ENCODE measurements at regions of chr20 and their contacts with region 1.

Region 1: DNA sequence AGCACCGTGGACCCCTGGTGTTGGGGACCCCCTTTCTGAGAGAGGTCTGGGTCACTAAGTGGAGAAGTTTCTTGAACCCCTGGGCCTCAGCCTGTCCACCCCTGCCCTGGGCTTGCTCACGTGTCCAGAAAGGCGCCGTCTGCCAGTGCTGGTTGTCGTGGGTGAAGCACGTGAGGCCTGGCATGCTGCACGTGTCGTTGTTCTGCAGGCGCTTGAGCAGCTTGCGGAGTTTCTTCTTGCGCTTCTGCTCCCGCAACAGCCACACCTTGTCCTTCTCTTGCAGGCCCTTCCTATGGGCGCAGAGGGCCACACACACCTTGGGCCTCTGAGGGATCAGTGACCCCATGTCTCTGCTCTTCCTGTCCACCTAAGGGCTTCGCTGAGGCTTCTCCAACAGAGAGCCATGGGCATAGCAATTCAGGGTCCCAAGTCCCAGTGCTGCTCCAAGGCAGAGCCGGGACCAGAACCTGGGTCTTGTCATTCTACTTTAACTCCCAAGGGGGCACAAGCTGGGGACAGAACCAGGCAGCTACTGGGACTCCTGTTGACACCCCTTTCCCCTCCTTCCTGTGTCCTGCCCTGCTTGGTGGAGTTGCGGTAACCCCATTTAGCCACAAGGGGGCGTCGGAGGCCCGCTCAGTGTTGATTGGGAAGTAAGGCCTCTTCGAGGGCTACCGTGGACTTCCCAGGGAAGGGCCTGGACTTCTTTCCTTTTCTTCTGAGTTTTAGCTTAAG is 121.8 kb downstream of the SULF2 start:
- DNase-seq: peak; percentile 59 to 93 (median 80)
- ATAC-seq: peak; percentile 95
- H3K4me3 ChIP-seq: no peak overlapping the region
- H3K27ac ChIP-seq: no peak overlapping the region
- H3K4me1 ChIP-seq: peaks cover 0 to 9% of the 10 kb centered on the region in 2 donors
- H3K27me3 ChIP-seq: no peaks in the 10 kb centered on the region
- CTCF ChIP-seq: peak; percentile 97 to 98

Region 2: DNA sequence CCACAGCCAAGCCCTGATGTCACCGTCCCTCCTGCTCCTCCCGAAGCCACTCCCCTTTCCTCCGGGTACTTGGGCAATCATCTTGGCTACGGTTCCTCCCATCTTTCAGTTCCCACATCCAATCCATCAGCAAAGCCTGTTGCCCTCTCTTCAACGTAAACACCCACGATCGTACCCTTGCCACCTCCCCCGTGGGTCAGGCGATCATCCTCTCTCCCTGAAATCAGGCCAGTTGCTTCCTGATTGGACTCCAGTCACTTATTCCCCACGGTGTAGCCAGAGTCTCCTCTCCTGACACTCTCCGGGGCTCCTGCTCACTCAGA is 77.3 kb after region 1 on chr20:
- intact Hi-C with region 1: no loop called
- DNase-seq: peak in 2 of 4 donors; percentile 79 to 83
- ATAC-seq: peak; percentile 74
- H3K4me3 ChIP-seq: no peak overlapping the region
- H3K27ac ChIP-seq: no peak overlapping the region
- H3K4me1 ChIP-seq: peaks cover 0 to 22% of the 10 kb centered on the region in 2 donors
- H3K27me3 ChIP-seq: peaks cover 0 to 31% of the 10 kb centered on the region in 2 donors
- CTCF ChIP-seq: no peak

Region 3: GRCh38 chr20:47821481-47822439 is 158.3 kb after region 1 on chr20:
- intact Hi-C with region 1: no loop called
- DNase-seq: no peak
- ATAC-seq: no peak
- H3K4me3 ChIP-seq: no peak overlapping the region
- H3K27ac ChIP-seq: no peak overlapping the region
- H3K4me1 ChIP-seq: no peaks in the 10 kb centered on the region
- H3K27me3 ChIP-seq: peaks cover 0 to 62% of the 10 kb centered on the region in 2 donors
- CTCF ChIP-seq: no peak

Region 4: GRCh38 chr20:47914792-47915191 is 251.3 kb after region 1 on chr20:
- intact Hi-C with region 1: no loop called
- DNase-seq: no peak
- ATAC-seq: no peak
- H3K4me3 ChIP-seq: no peak overlapping the region
- H3K27ac ChIP-seq: no peak overlapping the region
- H3K4me1 ChIP-seq: no peaks in the 10 kb centered on the region
- H3K27me3 ChIP-seq: peaks cover 0 to 20% of the 10 kb centered on the region in 2 donors
- CTCF ChIP-seq: no peak

Region 5: DNA sequence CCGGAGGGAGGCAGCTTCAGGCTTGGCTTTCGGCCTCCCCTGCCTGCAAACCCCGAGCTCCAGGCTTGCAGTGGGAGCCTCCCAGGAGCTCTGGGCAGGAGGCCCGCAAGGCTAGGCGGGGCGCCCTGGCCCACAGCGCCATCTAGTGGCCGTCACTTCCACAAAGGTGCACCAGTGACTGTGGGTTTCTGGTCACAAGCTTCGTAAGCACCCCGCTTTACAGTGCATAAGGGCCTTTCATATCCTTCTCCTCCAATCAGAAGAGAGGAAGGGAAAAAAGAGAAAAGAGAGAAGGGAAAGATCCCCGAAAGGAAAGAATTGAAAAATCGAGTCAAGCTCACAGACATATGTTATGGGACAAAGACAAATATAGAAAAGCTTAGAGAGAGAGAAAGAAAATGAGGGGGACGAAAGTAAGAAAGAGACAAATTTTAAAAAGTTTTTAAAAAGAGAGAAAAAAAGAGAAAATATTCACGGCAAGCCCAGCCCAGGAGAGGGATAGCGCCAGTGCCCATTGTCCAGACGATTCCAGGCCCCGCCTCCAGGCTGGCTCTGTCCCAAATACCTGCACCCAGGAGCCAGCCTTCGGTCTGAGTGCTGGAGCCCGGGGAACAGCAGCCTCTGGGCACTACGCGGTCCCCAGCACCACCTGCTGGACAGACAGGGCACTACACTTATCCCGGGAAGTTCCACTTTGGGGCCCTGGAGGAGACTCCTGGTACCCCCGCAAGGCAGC is 957.2 kb after region 1 on chr20:
- intact Hi-C with region 1: loop called in 1 of 2 experiments (anchors 5 kb)
- DNase-seq: peak; percentile 70 to 93 (median 84)
- ATAC-seq: peak; percentile 98
- H3K4me3 ChIP-seq: peak overlapping the region in 1 of 2 donors; percentile 3
- H3K27ac ChIP-seq: no peak overlapping the region
- H3K4me1 ChIP-seq: peaks cover 3 to 20% of the 10 kb centered on the region in 2 donors
- H3K27me3 ChIP-seq: peaks cover 0 to 10% of the 10 kb centered on the region in 2 donors
- CTCF ChIP-seq: peak; percentile 73 to 74

Measured in left lung (tissue), 14 donors.